ENCODE measurements at regions of chr16 and their contacts with region 1.

Region 1: GRCh38 chr16:24253192-24253591 is 2.9 kb upstream of the CACNG3 start:
- DNase-seq: peak in 4 of 5 donors; percentile 33 to 48 (median 42)
- H3K4me3 ChIP-seq: no peak overlapping the region
- H3K4me3 Mint-ChIP-seq: no peak overlapping the region
- H3K27ac ChIP-seq: no peak overlapping the region
- H3K27ac Mint-ChIP-seq: no peak overlapping the region
- H3K4me1 ChIP-seq: no peaks in the 10 kb centered on the region
- H3K4me1 Mint-ChIP-seq: peaks cover 0 to 7% (median 4%) of the 10 kb centered on the region in 4 donors
- H3K27me3 ChIP-seq: peaks cover 21% of the 10 kb centered on the region
- H3K27me3 Mint-ChIP-seq: peaks cover 38 to 42% of the 10 kb centered on the region in 2 donors

Region 2: DNA sequence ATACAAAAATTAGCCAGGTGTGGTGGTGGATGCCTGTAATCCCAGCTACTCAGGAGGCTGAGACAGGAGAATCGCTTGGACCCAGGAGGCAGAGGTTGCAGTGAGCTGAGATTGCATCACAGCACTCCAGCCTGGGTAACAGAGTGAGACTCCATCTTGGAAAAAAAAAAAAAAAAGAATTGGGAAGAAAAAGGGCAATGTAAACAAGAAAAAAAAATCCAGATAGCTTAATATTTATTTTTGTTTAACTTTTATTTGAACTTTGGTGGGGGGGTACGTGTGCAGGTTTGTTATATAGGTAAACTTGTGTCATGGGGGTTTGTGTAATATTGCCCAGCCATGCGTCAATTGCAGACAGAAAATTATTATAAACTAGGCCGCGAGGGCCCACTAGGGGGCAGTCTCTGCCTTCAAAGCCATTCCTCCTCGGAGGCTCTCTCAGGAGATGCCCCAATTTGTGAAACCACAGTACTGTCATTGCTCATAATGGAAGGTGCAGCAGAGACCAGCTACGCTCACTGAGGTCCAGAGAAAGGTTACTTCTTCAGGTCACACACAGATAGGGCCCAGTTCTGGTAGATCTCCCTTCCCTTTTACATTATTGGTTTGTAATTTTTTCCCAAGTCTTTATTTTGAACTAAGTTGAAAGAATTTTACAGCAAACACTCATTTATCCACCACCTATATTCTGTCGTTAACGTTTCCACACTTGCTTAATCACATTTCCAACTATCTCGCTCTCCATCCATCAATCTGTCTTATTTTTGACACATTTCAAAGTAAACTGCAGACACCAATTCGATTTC is 211.2 kb before region 1 on chr16:
- CTCF ChIA-PET with region 1: interaction called, 58 read pairs
- POLR2A ChIA-PET with region 1: no interaction called
- intact Hi-C with region 1: no loop called
- DNase-seq: peak; percentile 68 to 76 (median 73)
- H3K4me3 ChIP-seq: no peak overlapping the region
- H3K4me3 Mint-ChIP-seq: no peak overlapping the region
- H3K27ac ChIP-seq: no peak overlapping the region
- H3K27ac Mint-ChIP-seq: peak overlapping the region in 1 of 7 donors; percentile 24
- H3K4me1 ChIP-seq: no peaks in the 10 kb centered on the region
- H3K4me1 Mint-ChIP-seq: peaks cover 0 to 31% (median 12%) of the 10 kb centered on the region in 4 donors
- H3K27me3 ChIP-seq: no peaks in the 10 kb centered on the region
- H3K27me3 Mint-ChIP-seq: no peaks in the 10 kb centered on the region

Region 3: DNA sequence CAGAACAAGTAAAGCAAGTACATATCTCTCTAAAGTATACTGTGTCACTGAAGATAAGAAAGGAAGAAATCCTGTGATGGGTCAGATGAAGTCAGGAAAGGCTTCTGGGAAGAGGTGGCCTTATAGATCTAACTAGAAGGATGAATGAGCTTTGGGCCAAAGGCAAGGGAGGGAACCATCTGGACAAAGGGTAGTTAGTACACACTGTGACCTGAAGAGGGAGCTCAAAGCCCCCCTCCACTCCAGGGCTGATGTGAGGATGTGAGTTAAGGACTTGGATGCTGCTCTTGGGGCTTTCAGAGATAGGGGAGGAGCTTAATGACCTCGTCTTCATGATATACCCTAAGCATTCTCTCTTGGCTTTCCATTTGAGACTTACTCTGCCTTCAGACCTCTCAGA is 182.3 kb before region 1 on chr16:
- CTCF ChIA-PET with region 1: interaction called, 14 read pairs
- POLR2A ChIA-PET with region 1: no interaction called
- intact Hi-C with region 1: loop called (anchors 1 kb)
- DNase-seq: peak in 3 of 5 donors; percentile 13 to 26 (median 25)
- H3K4me3 ChIP-seq: no peak overlapping the region
- H3K4me3 Mint-ChIP-seq: peak overlapping the region in 1 of 8 donors; percentile 33
- H3K27ac ChIP-seq: no peak overlapping the region
- H3K27ac Mint-ChIP-seq: peak overlapping the region in 6 of 7 donors; percentile 4 to 54 (median 34)
- H3K4me1 ChIP-seq: peaks cover 29% of the 10 kb centered on the region
- H3K4me1 Mint-ChIP-seq: peaks cover 36 to 56% (median 52%) of the 10 kb centered on the region in 4 donors
- H3K27me3 ChIP-seq: no peaks in the 10 kb centered on the region
- H3K27me3 Mint-ChIP-seq: no peaks in the 10 kb centered on the region

Region 4: GRCh38 chr16:24088767-24089166 is 164.4 kb before region 1 on chr16:
- CTCF ChIA-PET with region 1: no interaction called
- POLR2A ChIA-PET with region 1: no interaction called
- intact Hi-C with region 1: no loop called
- DNase-seq: no peak
- H3K4me3 ChIP-seq: no peak overlapping the region
- H3K4me3 Mint-ChIP-seq: no peak overlapping the region
- H3K27ac ChIP-seq: no peak overlapping the region
- H3K27ac Mint-ChIP-seq: peak overlapping the region in 1 of 7 donors; percentile 29
- H3K4me1 ChIP-seq: no peaks in the 10 kb centered on the region
- H3K4me1 Mint-ChIP-seq: peaks cover 5 to 24% (median 11%) of the 10 kb centered on the region in 4 donors
- H3K27me3 ChIP-seq: no peaks in the 10 kb centered on the region
- H3K27me3 Mint-ChIP-seq: no peaks in the 10 kb centered on the region

Region 5: GRCh38 chr16:24273473-24274182 is 20.4 kb after region 1 on chr16:
- CTCF ChIA-PET with region 1: interaction called, 11 read pairs
- POLR2A ChIA-PET with region 1: no interaction called
- intact Hi-C with region 1: no loop called
- DNase-seq: no peak
- H3K4me3 ChIP-seq: no peak overlapping the region
- H3K4me3 Mint-ChIP-seq: no peak overlapping the region
- H3K27ac ChIP-seq: no peak overlapping the region
- H3K27ac Mint-ChIP-seq: no peak overlapping the region
- H3K4me1 ChIP-seq: no peaks in the 10 kb centered on the region
- H3K4me1 Mint-ChIP-seq: no peaks in the 10 kb centered on the region
- H3K27me3 ChIP-seq: no peaks in the 10 kb centered on the region
- H3K27me3 Mint-ChIP-seq: peaks cover 26 to 31% of the 10 kb centered on the region in 2 donors